Mammary epithelial cell (primary cell): ENCODE measurements at regions of chr5 and their contacts with region 1.

Region 1: DNA sequence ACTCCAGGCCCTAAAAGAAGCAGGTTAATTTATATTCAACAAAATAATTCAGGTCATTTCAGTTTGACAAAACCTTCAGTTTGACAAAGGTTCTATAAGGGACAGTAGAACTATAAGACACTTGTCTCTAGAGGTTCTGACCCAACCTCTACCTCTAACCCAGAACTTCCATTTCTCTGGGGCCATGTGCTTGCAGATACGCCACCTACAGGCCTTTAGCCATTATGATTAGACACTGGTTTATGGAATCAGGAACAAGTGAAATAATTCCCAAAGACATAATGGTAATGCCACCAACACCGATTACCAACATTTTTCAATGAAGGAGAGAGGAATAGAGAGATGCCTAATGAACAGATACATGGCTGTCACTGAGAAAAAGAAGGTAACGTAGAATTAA is 733.9 kb downstream of the PRELID2 start:
- DNase-seq: no peak
- H3K4me3 ChIP-seq: no peak overlapping the region
- H3K27ac ChIP-seq: no peak overlapping the region
- H3K4me1 ChIP-seq: no peaks in the 10 kb centered on the region
- H3K27me3 ChIP-seq: peaks cover 2% of the 10 kb centered on the region
- CTCF ChIP-seq: peak; percentile 57 to 60

Region 2: DNA sequence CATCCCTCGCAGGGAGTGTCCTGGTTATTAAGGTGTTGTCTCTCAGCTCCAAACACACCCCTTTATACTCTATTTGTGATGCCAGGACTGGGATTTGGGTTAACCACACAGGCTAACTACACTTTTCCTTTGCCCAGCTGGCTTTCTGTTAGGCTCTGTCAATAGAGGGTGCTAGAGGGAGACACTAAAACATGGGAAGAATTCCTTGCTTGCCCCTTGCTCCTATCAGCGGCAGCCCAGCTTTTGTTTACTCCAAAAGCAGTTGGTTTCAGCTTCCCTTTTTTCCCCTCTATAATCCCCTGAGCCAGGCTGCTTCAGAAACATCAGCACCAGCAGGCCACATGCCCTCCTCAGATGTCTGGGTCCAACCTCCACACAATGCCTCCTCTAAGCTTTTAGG is 633.5 kb before region 1 on chr5:
- CTCF ChIA-PET with region 1: no interaction called
- dilution Hi-C with region 1: no loop called
- in situ Hi-C with region 1: no loop called
- intact Hi-C with region 1: loop called (anchors 5 kb)
- DNase-seq: peak; percentile 25
- H3K4me3 ChIP-seq: no peak overlapping the region
- H3K27ac ChIP-seq: no peak overlapping the region
- H3K4me1 ChIP-seq: no peaks in the 10 kb centered on the region
- H3K27me3 ChIP-seq: no peaks in the 10 kb centered on the region
- CTCF ChIP-seq: peak; percentile 66 to 84

Region 3: DNA sequence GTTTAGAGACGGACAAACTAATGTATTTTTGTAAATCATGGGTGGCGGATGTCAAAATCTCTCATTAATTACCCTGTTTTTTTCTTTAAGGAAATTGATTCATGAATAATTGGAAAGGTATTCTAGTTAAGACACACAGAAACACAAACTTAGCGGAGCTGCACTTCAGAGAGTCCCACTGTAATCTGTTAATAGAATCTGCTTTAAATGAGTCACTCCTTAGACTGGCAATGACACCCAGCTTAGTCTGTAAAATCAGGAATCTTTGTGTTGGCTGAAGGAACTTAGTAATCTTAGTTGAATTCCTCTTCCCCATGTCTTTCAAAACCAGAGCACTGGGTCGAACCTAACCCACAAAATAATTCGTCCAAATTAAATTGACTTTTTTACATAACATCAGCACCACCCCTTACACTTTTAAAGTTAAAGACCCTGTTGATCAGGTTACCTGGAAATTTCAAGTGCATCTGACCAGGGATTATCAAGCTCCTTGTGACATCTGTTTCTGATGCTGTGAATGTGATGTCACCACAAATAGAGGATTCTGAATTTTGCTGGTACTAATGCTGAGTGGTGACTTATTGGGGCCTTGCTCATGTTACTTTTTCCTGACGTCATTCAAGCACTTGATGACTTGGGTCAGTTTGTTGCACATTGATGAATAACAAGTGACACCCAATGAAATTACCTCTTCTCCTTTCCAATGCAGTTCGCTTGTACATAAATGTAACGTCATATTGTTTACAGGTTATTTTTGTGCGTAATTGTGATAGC is 616.9 kb before region 1 on chr5:
- CTCF ChIA-PET with region 1: no interaction called
- dilution Hi-C with region 1: no loop called
- in situ Hi-C with region 1: no loop called
- intact Hi-C with region 1: loop called (anchors 5 kb)
- DNase-seq: peak; percentile 32
- H3K4me3 ChIP-seq: no peak overlapping the region
- H3K27ac ChIP-seq: no peak overlapping the region
- H3K4me1 ChIP-seq: no peaks in the 10 kb centered on the region
- H3K27me3 ChIP-seq: peaks cover 3% of the 10 kb centered on the region
- CTCF ChIP-seq: no peak

Region 4: DNA sequence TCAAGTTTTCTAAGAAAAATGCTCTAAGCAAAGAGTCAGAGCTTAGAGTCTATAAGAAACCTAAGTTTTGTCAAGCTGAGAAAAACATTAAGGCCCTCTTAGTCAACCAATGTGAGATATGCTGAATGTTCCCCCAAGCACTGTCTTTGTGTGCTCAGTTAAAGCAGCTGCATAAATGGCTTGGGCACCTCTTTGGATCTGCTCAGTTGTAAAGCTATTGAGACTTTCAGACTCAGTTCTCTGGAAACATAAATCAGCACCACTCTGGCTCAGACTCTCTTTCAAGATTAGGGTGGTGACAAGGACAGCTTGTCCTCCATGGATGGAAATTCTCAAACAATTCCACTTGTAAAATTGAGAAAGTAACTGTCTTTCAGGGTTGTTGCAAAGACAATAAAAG is 74.0 kb before region 1 on chr5:
- CTCF ChIA-PET with region 1: no interaction called
- dilution Hi-C with region 1: loop called (anchors 5 kb)
- in situ Hi-C with region 1: no loop called
- intact Hi-C with region 1: no loop called
- DNase-seq: no peak
- H3K4me3 ChIP-seq: no peak overlapping the region
- H3K27ac ChIP-seq: no peak overlapping the region
- H3K4me1 ChIP-seq: no peaks in the 10 kb centered on the region
- H3K27me3 ChIP-seq: no peaks in the 10 kb centered on the region
- CTCF ChIP-seq: no peak